ENCODE measurements at regions of chr1 and their contacts with region 1.

Region 1: GRCh38 chr1:234656856-234657654 is 47.1 kb upstream of the IRF2BP2 start:
- DNase-seq: peak; percentile 100
- H3K4me3 ChIP-seq: peak overlapping the region; percentile 51 to 70 (median 61)
- H3K27ac ChIP-seq: peak overlapping the region; percentile 99
- H3K4me1 ChIP-seq: peaks cover 47% of the 10 kb centered on the region
- H3K27me3 ChIP-seq: no peaks in the 10 kb centered on the region
- CTCF ChIP-seq: peak in 1 of 2 donors; percentile 21

Region 2: DNA sequence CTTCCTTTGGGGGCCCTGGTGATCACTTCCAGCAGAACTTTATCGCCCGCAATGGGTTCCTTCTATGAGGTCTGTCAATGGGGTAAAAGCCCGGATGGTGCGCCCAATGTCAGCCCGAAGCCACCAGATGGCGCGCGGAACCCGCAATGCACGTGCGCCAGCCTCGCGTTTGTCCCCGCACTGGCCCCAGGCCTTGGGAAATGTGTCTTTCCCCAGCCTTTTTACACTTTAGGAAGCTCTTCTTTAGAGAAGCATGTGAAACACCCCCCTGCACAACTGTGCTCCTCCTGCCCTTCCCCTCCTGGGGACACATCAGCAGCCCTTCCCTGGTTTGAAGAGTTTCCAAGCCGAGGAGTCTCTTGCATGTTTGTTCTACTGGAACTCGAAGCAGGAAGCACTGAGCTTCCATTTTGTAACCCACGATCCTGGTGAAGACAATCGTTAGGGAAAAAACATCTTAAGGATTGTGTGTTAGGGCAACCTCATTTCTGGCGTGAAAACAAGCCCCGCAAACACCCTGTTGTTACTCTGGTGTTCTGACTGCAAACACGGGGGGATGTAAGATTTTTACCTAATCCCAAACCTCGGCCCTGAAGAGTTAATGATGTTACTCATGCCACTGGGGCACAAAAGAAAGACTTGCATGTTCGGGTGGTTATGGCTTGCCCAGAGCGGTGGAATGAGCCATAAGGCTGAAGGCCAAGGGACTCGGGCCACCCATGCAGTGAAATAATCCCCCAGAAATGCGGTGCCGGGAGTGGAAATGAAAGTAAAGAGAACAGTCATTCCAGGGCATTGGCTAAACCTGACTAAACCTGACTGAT is 157.7 kb before region 1 on chr1:
- CTCF ChIA-PET with region 1: no interaction called
- dilution Hi-C with region 1: no loop called
- in situ Hi-C with region 1: no loop called
- intact Hi-C with region 1: loop called (anchors 2 kb)
- DNase-seq: peak; percentile 84
- H3K4me3 ChIP-seq: peak overlapping the region in 2 of 3 experiments; percentile 10 to 13
- H3K27ac ChIP-seq: peak overlapping the region; percentile 90
- H3K4me1 ChIP-seq: peaks cover 38% of the 10 kb centered on the region
- H3K27me3 ChIP-seq: no peaks in the 10 kb centered on the region
- CTCF ChIP-seq: peak; percentile 89 to 97

Region 3: GRCh38 chr1:234631721-234632125 is 25.3 kb before region 1 on chr1:
- CTCF ChIA-PET with region 1: no interaction called
- dilution Hi-C with region 1: no loop called
- in situ Hi-C with region 1: no loop called
- intact Hi-C with region 1: loop called (anchors 2 kb)
- DNase-seq: peak; percentile 94
- H3K4me3 ChIP-seq: no peak overlapping the region
- H3K27ac ChIP-seq: peak overlapping the region; percentile 82
- H3K4me1 ChIP-seq: peaks cover 18% of the 10 kb centered on the region
- H3K27me3 ChIP-seq: no peaks in the 10 kb centered on the region
- CTCF ChIP-seq: no peak

Region 4: GRCh38 chr1:234699795-234700665 is 43.0 kb after region 1 on chr1:
- CTCF ChIA-PET with region 1: no interaction called
- dilution Hi-C with region 1: loop called (anchors 5 kb)
- in situ Hi-C with region 1: no loop called
- intact Hi-C with region 1: no loop called
- DNase-seq: peak; percentile 82
- H3K4me3 ChIP-seq: no peak overlapping the region
- H3K27ac ChIP-seq: no peak overlapping the region
- H3K4me1 ChIP-seq: peaks cover 12% of the 10 kb centered on the region
- H3K27me3 ChIP-seq: no peaks in the 10 kb centered on the region
- CTCF ChIP-seq: no peak

Region 5: DNA sequence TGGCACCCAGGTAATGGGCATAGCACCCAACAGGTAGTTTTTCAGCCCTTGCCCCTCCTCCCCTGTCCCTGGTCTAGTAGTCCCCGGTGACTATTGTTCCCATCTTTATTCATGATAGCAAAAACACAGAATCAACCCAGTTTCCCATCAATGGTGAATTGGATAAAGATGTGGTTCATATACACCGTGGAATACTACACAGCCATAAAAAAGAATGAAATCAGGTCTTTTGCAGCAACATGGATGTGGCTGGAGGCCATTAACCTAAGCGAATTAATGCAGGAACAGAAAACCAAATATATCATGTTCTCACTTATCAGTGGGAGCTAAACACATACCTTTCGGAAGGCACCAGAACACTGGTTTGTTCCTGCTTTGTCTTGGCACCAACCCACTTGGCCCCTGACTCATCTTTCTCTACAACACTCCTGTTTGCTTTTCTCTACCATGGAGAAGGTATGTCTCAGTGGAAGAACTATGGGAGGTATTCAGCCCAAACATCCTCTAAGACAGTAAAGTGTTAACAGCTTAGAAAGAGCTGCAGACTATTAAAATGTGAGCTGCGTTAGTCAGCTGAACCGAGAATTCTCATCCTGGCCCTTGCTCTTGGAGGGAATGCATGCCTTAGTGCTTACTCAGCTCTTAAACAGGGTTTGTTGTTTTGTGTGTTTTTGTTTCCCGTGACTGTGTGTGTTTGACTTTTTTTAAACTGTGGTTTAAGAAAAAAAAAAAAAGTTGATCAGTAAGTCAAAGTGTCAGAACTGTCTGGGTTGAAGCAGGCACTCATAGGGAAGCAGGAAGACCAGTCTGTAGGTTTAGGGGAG is 268.6 kb after region 1 on chr1:
- CTCF ChIA-PET with region 1: no interaction called
- dilution Hi-C with region 1: no loop called
- in situ Hi-C with region 1: no loop called
- intact Hi-C with region 1: loop called (anchors 2 kb)
- DNase-seq: peak; percentile 99
- H3K4me3 ChIP-seq: no peak overlapping the region
- H3K27ac ChIP-seq: peak overlapping the region; percentile 60
- H3K4me1 ChIP-seq: peaks cover 16% of the 10 kb centered on the region
- H3K27me3 ChIP-seq: no peaks in the 10 kb centered on the region
- CTCF ChIP-seq: no peak

Region 6: GRCh38 chr1:235011599-235012435 is 354.8 kb after region 1 on chr1:
- CTCF ChIA-PET with region 1: no interaction called
- dilution Hi-C with region 1: no loop called
- in situ Hi-C with region 1: no loop called
- intact Hi-C with region 1: loop called (anchors 1 kb)
- DNase-seq: peak; percentile 100
- H3K4me3 ChIP-seq: no peak overlapping the region
- H3K27ac ChIP-seq: peak overlapping the region; percentile 97
- H3K4me1 ChIP-seq: peaks cover 20% of the 10 kb centered on the region
- H3K27me3 ChIP-seq: no peaks in the 10 kb centered on the region
- CTCF ChIP-seq: no peak